ENCODE measurements at regions of chr3 and their contacts with region 1.

Region 1: DNA sequence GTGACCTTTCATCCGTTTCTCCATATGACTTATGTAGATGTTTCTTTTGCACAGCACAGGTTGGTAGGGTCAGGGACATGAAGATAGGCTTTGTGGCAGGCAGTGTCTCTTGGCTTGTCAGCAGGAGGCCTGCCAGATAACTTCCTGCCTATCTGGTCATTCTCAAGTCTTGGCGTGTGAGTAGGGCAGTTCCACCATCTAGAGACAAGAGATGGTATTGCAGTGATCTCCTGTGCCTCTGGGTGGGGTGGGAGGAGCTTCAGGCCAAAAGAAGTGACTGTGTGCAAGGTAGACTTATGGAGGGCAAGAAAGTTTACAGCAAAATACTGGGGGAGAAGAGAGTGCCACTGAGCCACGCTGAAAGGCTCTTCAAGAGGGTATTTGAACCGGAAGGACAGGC is 11.0 kb downstream of the TEX264 start:
- DNase-seq: peak; percentile 72
- ATAC-seq: peak; percentile 91
- H3K4me3 Mint-ChIP-seq: no peak overlapping the region
- H3K27ac Mint-ChIP-seq: peak overlapping the region; percentile 72; the same call in 1 of the 2 replicates
- H3K4me1 Mint-ChIP-seq: peaks cover 18% of the 10 kb centered on the region
- H3K27me3 Mint-ChIP-seq: no peaks in the 10 kb centered on the region
- CTCF ChIP-seq: peak; percentile 70

Region 2: DNA sequence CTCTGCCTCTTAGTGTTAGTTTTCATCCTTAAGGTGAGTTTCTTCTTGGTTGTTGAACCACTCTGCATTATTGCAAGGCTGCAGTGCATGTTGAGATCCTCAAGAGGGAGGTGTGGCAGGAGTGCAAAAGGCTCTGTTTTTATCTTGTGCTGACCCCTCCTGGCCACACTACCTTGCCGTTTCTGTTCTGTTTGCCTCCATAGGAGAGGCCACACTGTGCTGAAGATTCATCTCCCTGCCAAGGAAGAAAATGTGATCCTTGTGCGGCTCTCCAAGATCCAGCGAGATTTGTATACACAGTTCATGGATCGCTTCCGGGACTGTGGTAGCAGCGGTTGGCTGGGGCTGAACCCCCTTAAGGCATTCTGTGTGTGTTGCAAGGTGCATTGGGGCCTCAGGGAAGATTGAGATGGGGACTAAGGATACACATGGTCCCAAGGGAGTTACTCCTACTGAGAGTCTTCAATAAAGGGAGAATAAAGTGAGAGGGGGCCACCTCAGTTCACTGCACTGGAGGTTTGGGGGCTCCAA is 44.1 kb before region 1 on chr3:
- CTCF ChIA-PET with region 1: interaction called, 11 read pairs
- POLR2A ChIA-PET with region 1: no interaction called
- DNase-seq: peak; percentile 72
- ATAC-seq: peak; percentile 98
- H3K4me3 Mint-ChIP-seq: no peak overlapping the region
- H3K27ac Mint-ChIP-seq: peak overlapping the region; percentile 69
- H3K4me1 Mint-ChIP-seq: no peaks in the 10 kb centered on the region
- H3K27me3 Mint-ChIP-seq: no peaks in the 10 kb centered on the region
- CTCF ChIP-seq: peak; percentile 72

Region 3: DNA sequence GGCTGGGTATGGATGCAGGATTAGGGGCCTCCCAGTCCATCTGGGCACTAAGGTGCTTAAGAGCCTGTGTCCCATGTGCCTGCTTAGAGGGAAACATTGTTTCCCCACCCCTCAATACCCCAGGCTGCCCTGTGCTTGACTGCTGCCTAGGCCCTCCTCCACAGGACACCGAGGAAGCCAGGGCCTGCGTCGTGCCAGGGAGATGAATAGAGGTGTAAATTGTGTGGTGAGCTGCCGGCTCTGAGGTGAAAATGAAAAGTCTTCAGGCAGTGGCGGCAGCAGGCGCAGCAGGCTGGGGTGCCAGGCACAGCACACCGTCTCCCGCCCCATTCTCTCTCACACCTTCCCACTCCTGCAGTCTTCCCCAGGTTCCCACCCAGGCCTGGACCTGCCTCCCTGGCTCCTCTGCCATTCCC is 10.9 kb after region 1 on chr3:
- CTCF ChIA-PET with region 1: interaction called, 42 read pairs
- POLR2A ChIA-PET with region 1: no interaction called
- DNase-seq: no peak
- ATAC-seq: no peak
- H3K4me3 Mint-ChIP-seq: no peak overlapping the region
- H3K27ac Mint-ChIP-seq: no peak overlapping the region
- H3K4me1 Mint-ChIP-seq: peaks cover 6% of the 10 kb centered on the region
- H3K27me3 Mint-ChIP-seq: no peaks in the 10 kb centered on the region
- CTCF ChIP-seq: no peak

Region 4: DNA sequence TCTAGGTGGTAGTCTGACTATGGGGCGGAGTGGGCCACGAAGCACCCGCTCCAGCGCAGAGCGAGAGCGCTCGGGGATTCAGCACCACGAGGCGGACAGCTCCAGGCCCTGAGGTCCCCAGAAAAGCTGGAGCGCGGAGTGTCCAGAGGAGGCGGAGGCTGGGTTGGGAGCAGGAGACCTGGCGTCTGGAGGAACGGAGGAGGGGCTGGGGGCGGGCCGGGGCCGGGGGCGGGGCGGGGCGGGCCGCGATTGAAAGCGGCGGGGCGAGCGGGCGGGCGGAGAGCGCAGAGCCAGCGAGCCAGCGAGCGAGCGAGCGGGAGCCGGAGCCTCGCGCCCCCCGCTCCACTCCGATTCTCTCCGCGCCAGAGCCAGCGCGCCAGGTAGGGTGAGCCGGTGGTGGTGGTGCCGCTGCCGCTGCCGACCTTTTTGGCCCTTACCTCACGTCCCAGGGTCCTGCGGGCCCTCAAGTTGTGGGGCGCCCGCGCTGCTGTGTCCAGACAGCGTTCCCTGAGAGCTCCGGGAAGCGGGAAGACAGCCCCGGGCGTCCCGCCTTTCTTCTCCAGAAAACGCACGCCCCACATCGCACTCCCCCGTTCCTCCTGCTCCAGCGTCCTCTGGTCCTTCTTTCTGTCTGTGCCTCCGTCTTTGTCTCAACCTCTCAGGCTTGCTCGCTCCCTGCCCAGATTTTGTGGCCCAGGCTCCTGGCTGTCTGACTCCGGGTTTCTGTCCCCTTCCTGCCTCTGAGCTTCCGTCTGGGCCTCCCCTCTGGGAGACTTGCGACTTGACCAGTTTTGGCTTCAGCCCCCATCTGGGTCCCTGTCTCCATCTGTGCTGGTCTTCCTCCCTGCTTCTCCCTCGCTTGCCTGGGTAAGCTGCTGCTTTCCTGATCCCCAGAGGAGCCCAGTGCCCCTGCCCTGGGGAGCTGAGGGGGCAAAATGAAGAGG is 25.0 kb after region 1 on chr3 and contains the start of gene GRM2:
- CTCF ChIA-PET with region 1: interaction called, 25 read pairs
- POLR2A ChIA-PET with region 1: no interaction called
- DNase-seq: peak; percentile 93
- ATAC-seq: peak; percentile 76
- H3K4me3 Mint-ChIP-seq: peak within 1 kb of the TSS; percentile 92
- H3K27ac Mint-ChIP-seq: no peak within 1 kb of the TSS
- H3K4me1 Mint-ChIP-seq: peaks cover 29% of the 10 kb centered on the region
- H3K27me3 Mint-ChIP-seq: peaks cover 28% of the 10 kb centered on the region
- CTCF ChIP-seq: no peak
- total RNA-seq, gene GRM2: 2.8 to 4.1 TPM (median 3.7 TPM) in 3 replicates